Left colon (tissue), 2 donors: ENCODE measurements at regions of chr5 and their contacts with region 1.

Region 1: GRCh38 chr5:139633295-139634027 is 14.7 kb upstream of the CXXC5 start:
- DNase-seq: peak; percentile 62
- ATAC-seq: peak; percentile 19

Region 2: DNA sequence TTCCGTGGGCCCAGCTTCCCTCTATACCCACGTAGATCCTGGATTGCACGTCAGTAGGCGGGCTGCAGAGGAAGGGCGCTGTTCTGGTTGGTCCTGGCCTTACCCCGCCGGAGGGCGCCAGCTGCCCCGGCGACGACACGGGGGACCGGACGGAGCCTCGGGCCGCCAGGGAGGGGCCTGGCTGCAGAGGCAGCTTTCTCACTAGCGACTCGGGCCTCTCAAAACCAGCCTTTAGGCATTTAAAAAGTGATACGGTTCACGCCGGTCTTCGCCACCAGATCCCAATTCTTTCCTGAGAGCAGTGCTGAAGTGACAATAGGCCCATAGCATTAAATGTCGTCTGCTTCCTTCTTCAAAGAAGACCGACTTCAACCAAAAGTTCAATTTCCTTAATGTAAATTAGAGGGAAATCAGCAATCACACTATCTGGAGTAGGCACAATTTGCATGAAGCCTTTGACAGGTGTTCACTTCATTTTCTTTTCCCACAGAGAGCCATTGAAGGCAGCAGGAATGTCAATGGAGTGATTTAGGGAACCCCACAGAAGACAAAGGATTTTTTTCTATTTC is 90.0 kb before region 1 on chr5:
- intact Hi-C with region 1: no loop called
- DNase-seq: peak; percentile 77 to 83
- ATAC-seq: peak; percentile 98

Region 3: DNA sequence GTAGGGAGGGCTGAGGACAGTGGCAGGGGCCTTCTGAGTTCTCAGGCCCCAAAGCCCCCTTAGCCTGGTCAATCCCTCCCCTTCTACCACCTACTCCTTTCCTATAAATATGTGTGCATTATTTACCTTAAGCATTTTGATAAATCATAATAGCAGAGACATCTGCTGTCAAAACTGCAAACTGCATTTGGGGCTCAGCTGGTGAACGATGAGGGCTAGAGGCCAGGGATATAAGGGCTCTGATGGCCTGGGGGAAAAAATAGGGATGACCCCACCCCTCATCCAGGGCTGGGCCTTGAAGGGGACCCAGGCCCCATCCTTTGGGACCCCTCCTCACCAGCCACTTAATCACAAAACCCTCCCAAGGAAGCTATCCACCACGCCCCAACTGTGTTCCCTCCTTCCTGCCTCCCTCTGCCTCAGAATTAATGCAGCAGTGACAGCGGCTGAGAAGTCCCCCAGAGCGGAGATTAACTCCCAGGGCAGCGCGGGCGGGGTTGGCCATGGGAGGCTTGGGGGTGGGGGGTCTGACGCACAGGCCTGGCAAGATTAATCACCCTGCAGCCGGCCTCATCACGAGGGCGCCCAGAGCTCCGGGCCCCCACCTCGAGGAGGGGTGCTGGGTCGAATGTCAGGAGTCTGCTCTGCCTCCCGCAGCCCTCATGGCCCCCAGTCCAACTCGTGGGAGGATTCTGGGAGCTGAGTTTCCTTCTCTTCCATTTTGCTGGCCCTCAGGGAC is 56.8 kb after region 1 on chr5:
- intact Hi-C with region 1: loop called (anchors 5 kb)
- DNase-seq: peak in 1 of 2 donors; percentile 46
- ATAC-seq: peak; percentile 64

Region 4: DNA sequence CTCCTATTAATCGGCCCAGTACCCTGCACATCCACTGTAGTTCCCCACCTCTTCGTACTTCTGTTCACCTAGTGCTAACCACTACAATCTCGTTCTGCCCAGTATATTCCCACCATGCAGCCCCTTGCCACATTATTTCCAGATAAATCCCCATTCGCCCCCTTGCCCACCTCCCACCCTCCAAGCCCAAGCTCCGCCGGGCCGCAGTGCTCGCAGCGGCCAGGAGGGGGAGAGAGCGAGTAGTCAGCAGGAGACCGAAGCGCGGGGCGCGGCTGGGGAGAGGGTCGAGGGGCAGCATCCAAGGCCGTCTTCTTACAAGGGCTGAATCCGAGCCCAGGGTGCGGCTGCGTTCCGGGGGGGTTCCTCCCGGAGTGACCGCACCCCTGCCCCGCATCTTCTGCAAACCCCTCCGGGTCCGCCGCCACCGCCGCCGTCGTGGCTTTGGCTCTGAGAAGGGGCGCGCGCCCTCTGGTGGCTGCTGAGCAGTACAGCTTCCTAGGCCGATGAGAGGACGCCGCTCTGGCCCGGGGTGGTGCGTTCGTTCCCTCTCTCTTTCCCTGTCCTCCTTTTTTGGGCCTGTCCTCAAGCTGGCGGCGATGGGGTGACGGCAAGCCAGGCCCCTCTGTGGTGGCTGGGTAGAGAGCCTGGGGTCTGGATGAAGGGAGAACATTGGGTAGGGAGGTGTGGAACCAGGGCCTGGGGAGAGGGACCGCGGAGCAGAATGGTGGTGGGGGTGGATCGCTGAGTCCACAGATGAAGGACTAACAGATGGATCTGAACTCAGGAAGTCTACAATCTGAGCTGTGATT is 132.2 kb after region 1 on chr5:
- intact Hi-C with region 1: loop called (anchors 5 kb)
- DNase-seq: peak; percentile 60 to 79
- ATAC-seq: peak; percentile 87